Heart right ventricle (tissue), 16 donors: ENCODE measurements at regions of chr2 and their contacts with region 1.

Region 1: DNA sequence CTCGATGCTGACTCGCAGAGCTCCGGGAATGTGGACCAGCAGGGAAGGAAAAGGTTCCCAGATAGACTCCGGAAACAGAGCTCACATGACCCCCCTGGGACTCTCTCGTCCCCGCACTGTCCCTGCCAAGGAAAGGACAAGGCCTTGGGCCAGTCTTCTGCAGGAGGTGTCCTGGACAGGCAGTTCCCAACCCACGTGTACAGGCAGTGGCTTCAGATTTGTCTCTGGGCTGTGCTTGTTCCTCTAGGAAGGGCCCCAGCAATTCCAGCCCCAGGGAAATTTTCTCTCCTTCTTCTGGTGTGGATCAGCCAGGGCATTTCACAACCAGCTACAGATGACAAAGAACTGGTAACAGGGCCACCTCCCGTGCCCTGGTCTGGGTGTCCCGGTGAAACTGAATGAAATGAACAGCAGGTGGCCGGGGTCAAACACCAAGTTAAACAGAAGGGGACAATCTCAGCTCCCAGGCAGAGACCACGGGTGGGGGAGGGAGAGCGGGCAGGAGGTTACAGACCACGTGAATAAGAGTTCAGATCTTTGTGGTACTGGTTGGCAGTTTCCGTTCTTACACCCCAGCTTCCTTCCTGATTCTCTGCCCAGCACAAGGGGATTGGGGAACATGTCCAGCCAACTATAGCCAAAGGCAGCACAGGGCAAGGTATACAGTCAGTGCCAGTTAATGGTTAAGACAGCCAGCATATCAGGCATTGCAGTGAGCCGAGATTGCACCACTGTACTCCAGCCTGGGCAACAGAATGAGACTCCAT is 52.2 kb upstream of the CAB39 start:
- DNase-seq: peak; percentile 41 to 42
- ATAC-seq: peak; percentile 35 to 81 (median 63)
- H3K4me3 ChIP-seq: no peak overlapping the region
- H3K27ac ChIP-seq: peak overlapping the region in 6 of 10 donors; percentile 27 to 91 (median 44)
- H3K4me1 ChIP-seq: peaks cover 0 to 87% (median 3%) of the 10 kb centered on the region in 9 donors
- H3K27me3 ChIP-seq: no peaks in the 10 kb centered on the region
- CTCF ChIP-seq: no peak

Region 2: DNA sequence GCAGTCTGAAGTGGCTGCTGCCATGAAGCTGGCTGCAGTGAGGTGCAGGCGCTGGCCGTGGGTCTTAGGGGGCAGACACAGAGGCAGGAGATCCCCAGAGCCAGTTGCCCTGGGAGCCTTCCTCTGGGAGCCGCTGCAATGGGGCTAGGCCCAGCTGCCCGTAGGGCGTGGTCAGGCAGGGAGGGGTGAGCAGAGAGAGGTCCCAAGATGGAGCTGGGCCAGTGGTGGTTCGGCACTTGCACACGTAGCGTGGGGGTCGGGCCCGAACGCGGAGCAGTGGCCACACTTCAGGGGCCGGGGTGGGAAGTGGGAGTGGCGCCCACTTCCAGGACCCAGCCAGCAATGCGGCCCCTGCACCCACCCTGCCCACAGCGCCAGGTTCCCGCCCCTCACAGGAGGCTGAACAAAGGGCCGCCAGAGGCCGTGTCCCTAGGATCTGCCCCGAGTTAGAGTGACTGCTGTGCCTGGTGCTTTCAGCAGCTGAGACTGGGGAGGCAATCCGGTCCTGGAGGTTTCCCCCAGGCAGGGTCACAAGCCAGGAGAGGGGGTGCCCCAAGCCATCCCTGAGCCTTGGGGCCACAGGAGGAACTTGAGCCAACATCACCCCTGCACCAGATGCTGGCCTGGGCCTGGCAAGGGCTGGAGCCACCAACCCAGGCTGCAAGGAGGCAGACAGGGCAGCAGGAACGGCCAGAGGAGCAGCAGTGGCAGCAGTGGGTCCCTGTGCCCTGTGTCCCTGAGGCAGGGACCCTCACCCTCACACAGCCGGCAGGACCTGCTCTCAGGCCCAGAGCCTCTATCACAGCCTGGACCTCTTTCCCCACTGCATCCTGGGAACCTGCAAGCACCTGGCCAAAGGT is 354.8 kb before region 1 on chr2:
- intact Hi-C with region 1: loop called in 1 of 10 experiments (anchors 5 kb)
- DNase-seq: no peak
- ATAC-seq: no peak
- H3K4me3 ChIP-seq: no peak overlapping the region
- H3K27ac ChIP-seq: no peak overlapping the region
- H3K4me1 ChIP-seq: no peaks in the 10 kb centered on the region
- H3K27me3 ChIP-seq: no peaks in the 10 kb centered on the region
- CTCF ChIP-seq: no peak